ENCODE measurements at regions of chr19 and their contacts with region 1.

Region 1: DNA sequence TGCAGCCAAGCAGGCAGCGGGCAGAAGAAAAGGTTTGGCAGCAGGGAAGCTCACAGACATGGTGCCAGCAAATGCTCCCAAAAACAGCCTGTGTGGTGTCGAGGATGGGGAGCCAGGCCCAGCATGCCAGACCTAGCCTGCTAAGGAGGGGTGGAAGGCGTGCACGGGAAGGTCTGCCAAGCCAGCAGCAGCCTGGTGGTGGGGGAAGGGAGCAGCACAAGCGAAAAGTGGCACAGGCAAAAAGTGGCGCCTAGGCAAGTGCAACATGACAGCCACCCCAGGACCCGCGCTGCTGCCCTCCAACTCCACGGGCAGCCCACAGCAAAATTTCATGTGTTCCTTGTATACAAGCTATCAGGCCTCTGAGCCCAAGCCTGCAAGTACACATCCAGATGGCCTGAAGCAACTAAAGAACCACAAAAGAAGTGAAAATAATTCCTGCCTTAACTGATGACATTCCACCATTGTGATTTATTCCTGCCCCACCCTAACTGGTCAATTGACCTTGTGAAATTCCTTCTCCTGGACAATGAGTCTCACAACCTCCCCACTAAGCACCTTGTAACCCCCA is 137.8 kb downstream of the ZNF675 start:
- DNase-seq: peak; percentile 74
- ATAC-seq: peak; percentile 10
- H3K4me3 ChIP-seq: no peak overlapping the region
- H3K27ac ChIP-seq: peak overlapping the region; percentile 93
- H3K4me1 ChIP-seq: peaks cover 49% of the 10 kb centered on the region
- H3K27me3 ChIP-seq: no peaks in the 10 kb centered on the region
- CTCF ChIP-seq: no peak

Region 2: GRCh38 chr19:23481043-23481442 is 68.2 kb before region 1 on chr19:
- CTCF ChIA-PET with region 1: no interaction called
- POLR2A ChIA-PET with region 1: no interaction called
- intact Hi-C with region 1: loop called (anchors 5 kb)
- DNase-seq: peak; percentile 91
- ATAC-seq: peak; percentile 86
- H3K4me3 ChIP-seq: no peak overlapping the region
- H3K27ac ChIP-seq: peak overlapping the region; percentile 69
- H3K4me1 ChIP-seq: peaks cover 32% of the 10 kb centered on the region
- H3K27me3 ChIP-seq: no peaks in the 10 kb centered on the region
- CTCF ChIP-seq: no peak

Region 3: GRCh38 chr19:23527797-23528196 is 21.4 kb before region 1 on chr19:
- CTCF ChIA-PET with region 1: no interaction called
- POLR2A ChIA-PET with region 1: no interaction called
- intact Hi-C with region 1: no loop called
- DNase-seq: no peak
- ATAC-seq: no peak
- H3K4me3 ChIP-seq: 0 out of 2 replicates have a peak overlapping the region, but pooled peaks have one; percentile 0
- H3K27ac ChIP-seq: peak overlapping the region; percentile 60
- H3K4me1 ChIP-seq: peaks cover 8% of the 10 kb centered on the region; the same call in 1 of the 2 replicates
- H3K27me3 ChIP-seq: no peaks in the 10 kb centered on the region
- CTCF ChIP-seq: no peak

Region 4: GRCh38 chr19:23774524-23774971 is 225.3 kb after region 1 on chr19:
- CTCF ChIA-PET with region 1: no interaction called
- POLR2A ChIA-PET with region 1: no interaction called
- intact Hi-C with region 1: loop called (anchors 5 kb)
- DNase-seq: no peak
- ATAC-seq: no peak
- H3K4me3 ChIP-seq: no peak overlapping the region
- H3K27ac ChIP-seq: no peak overlapping the region
- H3K4me1 ChIP-seq: peaks cover 27% of the 10 kb centered on the region
- H3K27me3 ChIP-seq: no peaks in the 10 kb centered on the region
- CTCF ChIP-seq: no peak

Measured in PC-3 (cell line).